ENCODE measurements at regions of chr6 and their contacts with region 1.

Region 1: GRCh38 chr6:7312616-7313504 is at the start of gene SSR1:
- DNase-seq: peak; percentile 79 to 93 (median 86)
- ATAC-seq: peak; percentile 93 to 96
- H3K4me3 Mint-ChIP-seq: peak within 1 kb of the TSS; percentile 90 to 98 (median 96)
- H3K27ac Mint-ChIP-seq: peak within 1 kb of the TSS; percentile 90 to 97 (median 93)
- H3K4me1 Mint-ChIP-seq: peaks cover 19 to 60% (median 42%) of the 10 kb centered on the region in 4 donors
- H3K27me3 Mint-ChIP-seq: no peaks in the 10 kb centered on the region
- polyA plus RNA-seq, gene SSR1: 136 to 159 (median 156) TPM

Region 2: DNA sequence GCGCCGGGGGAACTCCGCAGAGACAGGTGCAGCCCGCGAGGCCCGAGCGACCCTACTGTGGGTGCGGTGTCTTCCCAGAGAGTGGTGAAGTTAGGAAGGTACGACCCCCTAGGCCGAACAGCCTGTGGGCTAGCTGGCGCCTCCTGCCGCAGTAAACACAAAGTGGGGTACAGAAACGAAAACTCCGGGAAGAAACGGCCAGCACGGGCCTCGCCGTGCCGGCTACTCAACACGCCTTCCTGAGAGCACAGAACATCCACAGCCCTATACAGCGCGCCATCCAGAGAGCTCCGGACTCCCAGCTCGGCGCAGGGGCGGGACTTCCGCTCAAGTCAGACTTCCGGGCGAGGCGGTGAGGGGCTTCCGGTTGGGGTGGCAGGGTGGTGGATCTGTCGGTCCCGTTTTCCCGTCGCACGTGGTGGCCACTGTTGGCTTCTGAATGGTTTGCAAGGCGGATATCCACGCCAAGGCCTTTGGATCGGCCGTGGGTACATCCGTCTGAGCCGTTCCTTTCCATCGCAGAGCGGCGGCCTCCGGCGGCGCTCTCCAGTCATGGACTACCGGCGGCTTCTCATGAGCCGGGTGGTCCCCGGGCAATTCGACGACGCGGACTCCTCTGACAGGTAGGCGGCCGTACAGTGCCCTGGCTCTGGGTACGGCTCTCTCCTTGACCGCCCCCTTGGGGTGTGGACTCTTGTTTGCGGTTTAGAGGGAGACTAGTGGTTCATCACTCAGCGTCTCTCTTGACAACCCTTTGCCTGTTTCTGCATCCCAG is 76.8 kb after region 1 on chr6 and contains the starts of genes CAGE1 and RIOK1:
- POLR2A ChIA-PET with region 1: interaction called, 16 read pairs
- DNase-seq: peak; percentile 90 to 97 (median 93)
- ATAC-seq: peak; percentile 89 to 92
- H3K4me3 Mint-ChIP-seq: peak within 1 kb of the TSS; percentile 83 to 98 (median 96)
- H3K27ac Mint-ChIP-seq: peak within 1 kb of the TSS; percentile 94 to 100 (median 99)
- H3K4me1 Mint-ChIP-seq: peaks cover 26 to 52% (median 49%) of the 10 kb centered on the region in 4 donors
- H3K27me3 Mint-ChIP-seq: no peaks in the 10 kb centered on the region
- polyA plus RNA-seq, gene CAGE1: not detected
- polyA plus RNA-seq, gene RIOK1: 18.1 to 24.4 (median 20.2) TPM